ENCODE measurements at regions of chr19 and their contacts with region 1.

Region 1: GRCh38 chr19:44972802-44973201 is 17.6 kb downstream of the CLPTM1 start:
- DNase-seq: no peak
- H3K4me3 ChIP-seq: no peak overlapping the region
- H3K27ac ChIP-seq: no peak overlapping the region
- H3K4me1 ChIP-seq: no peaks in the 10 kb centered on the region
- H3K27me3 ChIP-seq: no peaks in the 10 kb centered on the region
- CTCF ChIP-seq: no peak
- EP300 ChIP-seq: no peak
- POLR2A ChIP-seq: no peak

Region 2: DNA sequence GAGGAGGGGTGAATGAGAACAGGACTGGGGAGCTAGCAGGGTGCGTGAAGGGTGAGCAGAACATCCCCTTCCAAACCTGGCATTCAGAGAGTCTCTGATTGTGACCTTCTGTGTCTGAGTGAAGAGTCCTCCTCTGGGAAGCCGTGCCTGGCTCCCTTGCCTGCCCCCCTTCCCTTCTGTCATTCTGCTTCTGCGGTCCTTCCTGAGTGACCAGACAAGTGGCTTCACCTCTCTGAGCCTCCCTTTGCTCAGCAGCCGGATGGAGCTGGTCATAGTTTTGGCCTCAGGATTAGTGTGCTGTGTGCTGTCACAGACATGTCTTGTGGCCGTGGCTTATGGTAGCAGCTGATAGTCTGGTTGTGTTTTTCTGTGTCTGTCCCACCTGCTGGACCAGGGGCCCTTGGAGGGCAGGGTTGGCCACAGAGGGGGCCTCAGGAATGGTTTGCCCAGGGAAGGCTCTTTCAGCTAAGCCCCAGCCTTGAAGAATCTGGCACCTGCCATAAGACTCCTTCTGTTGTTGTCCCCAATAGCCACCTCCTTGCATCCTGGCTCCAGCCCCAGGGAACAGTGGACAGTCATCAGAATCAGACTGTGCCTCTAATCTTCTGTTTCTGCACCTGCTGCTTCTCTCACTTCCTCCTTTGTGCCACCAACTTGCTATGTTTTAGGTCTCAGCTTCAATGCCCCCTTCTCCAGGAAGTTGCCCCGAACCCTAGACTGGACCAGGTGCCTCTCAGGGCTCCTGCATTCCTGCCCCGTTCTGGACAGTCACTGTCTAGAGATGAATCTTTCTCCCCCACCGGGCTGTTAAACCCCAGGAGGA is 11.7 kb before region 1 on chr19:
- intact Hi-C with region 1: loop called in 1 of 4 experiments (anchors 2 kb)
- DNase-seq: no peak
- H3K4me3 ChIP-seq: no peak overlapping the region
- H3K27ac ChIP-seq: no peak overlapping the region
- H3K4me1 ChIP-seq: peaks cover 8% of the 10 kb centered on the region
- H3K27me3 ChIP-seq: no peaks in the 10 kb centered on the region
- CTCF ChIP-seq: no peak
- EP300 ChIP-seq: no peak
- POLR2A ChIP-seq: no peak